ENCODE measurements at regions of chr2 and their contacts with region 1.

Region 1: GRCh38 chr2:233251306-233252116 is at the start of gene ATG16L1:
- DNase-seq: peak; percentile 89 to 98 (median 96)
- H3K4me3 ChIP-seq: peak within 1 kb of the TSS; percentile 50 to 99 (median 92)
- H3K27ac ChIP-seq: peak within 1 kb of the TSS in 58 of 59 donors; percentile 21 to 93 (median 80)
- H3K27me3 ChIP-seq: no peaks in the 10 kb centered on the region
- CTCF ChIP-seq: peak; percentile 87 to 100 (median 98)
- total RNA-seq, gene ATG16L1: 32.3 to 74.5 (median 53.4) TPM

Region 2: DNA sequence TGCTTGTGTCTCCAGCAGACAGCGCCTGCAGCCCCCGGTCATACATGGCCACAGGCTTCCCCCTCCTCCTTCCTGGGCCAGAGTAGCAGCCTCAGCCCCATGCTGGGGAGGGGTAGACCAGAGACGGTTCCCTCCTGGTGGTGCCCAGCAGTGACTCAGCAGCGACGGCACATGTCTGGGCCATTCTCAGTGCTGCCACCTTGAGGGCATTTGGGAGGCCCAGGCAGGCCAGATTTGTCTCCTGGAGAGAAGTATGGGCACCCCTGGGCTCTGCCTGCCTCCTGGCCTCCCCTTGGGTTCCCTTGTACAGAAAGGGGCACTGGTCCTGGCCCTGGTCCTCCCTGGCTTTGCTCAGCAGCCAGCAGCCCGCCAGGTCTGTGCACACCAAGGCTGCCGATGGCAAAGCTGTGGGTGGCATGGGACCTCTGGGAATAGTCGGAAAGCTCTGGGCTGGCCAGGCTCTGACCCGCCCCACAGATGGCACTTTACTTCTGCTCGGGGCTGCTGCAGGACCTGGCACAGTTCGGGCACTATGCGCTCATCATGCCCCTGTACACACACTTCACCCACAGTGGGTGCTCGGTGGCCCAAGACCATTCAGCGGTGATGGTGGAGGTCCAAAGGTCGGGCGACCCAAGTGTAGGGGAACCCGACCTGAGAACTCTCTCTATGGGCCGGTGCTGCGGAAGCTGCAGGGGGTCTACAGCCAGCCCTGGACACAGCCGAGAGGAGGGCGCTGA is 806.9 kb before region 1 on chr2:
- intact Hi-C with region 1: loop called in 1 of 2 experiments (anchors 10 kb)
- DNase-seq: peak in 3 of 10 donors; percentile 13 to 46 (median 36)
- H3K4me3 ChIP-seq: no peak overlapping the region
- H3K27ac ChIP-seq: no peak overlapping the region
- H3K27me3 ChIP-seq: no peaks in the 10 kb centered on the region
- CTCF ChIP-seq: peak in 51 of 56 donors; percentile 12 to 60 (median 42)

Region 3: GRCh38 chr2:232611551-232612218 is 639.8 kb before region 1 on chr2:
- intact Hi-C with region 1: loop called (anchors 5 to 10 kb)
- DNase-seq: peak in 9 of 10 donors; percentile 31 to 88 (median 76)
- H3K4me3 ChIP-seq: no peak overlapping the region
- H3K27ac ChIP-seq: peak overlapping the region in 43 of 59 donors; percentile 2 to 79 (median 51)
- H3K27me3 ChIP-seq: no peaks in the 10 kb centered on the region
- CTCF ChIP-seq: peak; percentile 49 to 93 (median 86)

Region 4: DNA sequence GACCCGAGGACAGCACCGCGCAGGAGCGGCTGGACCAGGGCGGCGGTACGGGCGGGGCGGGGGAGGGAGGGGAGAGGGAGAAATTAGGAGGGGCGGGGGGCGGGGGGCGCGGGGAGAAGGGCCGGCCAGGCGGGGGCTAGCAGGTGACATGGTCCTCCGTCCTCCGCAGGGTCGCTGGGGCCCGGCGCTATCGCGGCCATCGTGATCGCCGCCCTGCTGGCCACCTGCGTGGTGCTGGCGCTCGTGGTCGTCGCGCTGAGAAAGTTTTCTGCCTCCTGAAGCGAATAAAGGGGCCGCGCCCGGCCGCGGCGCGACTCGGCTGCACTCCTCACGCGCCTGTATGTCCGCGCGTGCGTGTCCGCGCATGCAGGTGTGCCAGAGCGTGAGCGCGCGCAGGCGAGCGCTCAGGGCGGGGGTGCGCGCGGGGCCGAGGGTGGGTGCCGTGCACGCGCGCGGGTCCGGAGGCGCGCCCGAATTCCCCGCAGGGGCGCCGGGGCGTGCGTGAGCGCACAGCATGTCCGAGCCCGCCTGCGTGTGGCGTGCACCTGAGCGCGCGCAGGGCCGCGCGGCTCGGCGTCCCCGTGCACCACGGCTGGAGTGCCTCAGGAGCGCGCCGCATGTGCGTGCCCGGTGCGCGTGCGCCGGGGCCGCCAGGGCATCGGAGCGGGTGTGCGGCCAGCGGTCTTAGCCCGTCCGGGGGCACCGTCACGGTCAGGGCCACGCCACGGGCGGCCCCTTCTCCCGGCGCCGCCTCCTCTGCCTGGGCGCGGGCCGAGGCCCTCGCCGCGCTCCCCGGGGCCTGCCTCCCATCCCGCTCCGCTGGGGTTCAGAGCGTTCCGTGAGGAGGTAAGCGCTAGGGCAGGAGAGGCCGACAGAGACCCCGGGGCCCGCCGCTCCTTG is 375.2 kb before region 1 on chr2:
- intact Hi-C with region 1: loop called in 1 of 2 experiments (anchors 5 kb)
- DNase-seq: peak in 6 of 10 donors; percentile 29 to 81 (median 68)
- H3K4me3 ChIP-seq: peak overlapping the region; percentile 39 to 80 (median 62)
- H3K27ac ChIP-seq: peak overlapping the region; percentile 37 to 99 (median 95)
- H3K27me3 ChIP-seq: peaks cover 0 to 4% (median 0%) of the 10 kb centered on the region in 45 donors
- CTCF ChIP-seq: peak in 4 of 56 donors; percentile 8 to 23 (median 10)

Region 5: GRCh38 chr2:233443468-233444183 is 192.1 kb after region 1 on chr2:
- intact Hi-C with region 1: loop called (anchors 5 to 10 kb)
- DNase-seq: peak; percentile 60 to 88 (median 78)
- H3K4me3 ChIP-seq: no peak overlapping the region
- H3K27ac ChIP-seq: peak overlapping the region in 3 of 59 donors; percentile 18 to 66 (median 35)
- H3K27me3 ChIP-seq: no peaks in the 10 kb centered on the region
- CTCF ChIP-seq: peak; percentile 63 to 90 (median 81)